Naive thymus-derived CD4-positive, alpha-beta T cell (primary cell): ENCODE measurements at regions of chr10 and their contacts with region 1.

Region 1: GRCh38 chr10:110007701-110008517 is at the start of gene ADD3:
- DNase-seq: peak; percentile 82 to 93 (median 90)
- ATAC-seq: peak; percentile 86
- H3K4me3 ChIP-seq: peak within 1 kb of the TSS; percentile 66
- H3K4me3 Mint-ChIP-seq: peak within 1 kb of the TSS in 2 of 10 donors; percentile 99 to 100
- H3K27ac ChIP-seq: peak within 1 kb of the TSS; percentile 88
- H3K27ac Mint-ChIP-seq: peak within 1 kb of the TSS in 7 of 9 donors; percentile 91 to 98 (median 94)
- H3K4me1 ChIP-seq: peaks cover 33 to 36% of the 10 kb centered on the region in 2 donors
- H3K4me1 Mint-ChIP-seq: peaks cover 28 to 54% (median 44%) of the 10 kb centered on the region in 7 donors
- H3K27me3 ChIP-seq: no peaks in the 10 kb centered on the region
- H3K27me3 Mint-ChIP-seq: peaks cover 0 to 6% (median 0%) of the 10 kb centered on the region in 5 donors
- total RNA-seq, gene ADD3: 281 to 463 (median 342) TPM

Region 2: DNA sequence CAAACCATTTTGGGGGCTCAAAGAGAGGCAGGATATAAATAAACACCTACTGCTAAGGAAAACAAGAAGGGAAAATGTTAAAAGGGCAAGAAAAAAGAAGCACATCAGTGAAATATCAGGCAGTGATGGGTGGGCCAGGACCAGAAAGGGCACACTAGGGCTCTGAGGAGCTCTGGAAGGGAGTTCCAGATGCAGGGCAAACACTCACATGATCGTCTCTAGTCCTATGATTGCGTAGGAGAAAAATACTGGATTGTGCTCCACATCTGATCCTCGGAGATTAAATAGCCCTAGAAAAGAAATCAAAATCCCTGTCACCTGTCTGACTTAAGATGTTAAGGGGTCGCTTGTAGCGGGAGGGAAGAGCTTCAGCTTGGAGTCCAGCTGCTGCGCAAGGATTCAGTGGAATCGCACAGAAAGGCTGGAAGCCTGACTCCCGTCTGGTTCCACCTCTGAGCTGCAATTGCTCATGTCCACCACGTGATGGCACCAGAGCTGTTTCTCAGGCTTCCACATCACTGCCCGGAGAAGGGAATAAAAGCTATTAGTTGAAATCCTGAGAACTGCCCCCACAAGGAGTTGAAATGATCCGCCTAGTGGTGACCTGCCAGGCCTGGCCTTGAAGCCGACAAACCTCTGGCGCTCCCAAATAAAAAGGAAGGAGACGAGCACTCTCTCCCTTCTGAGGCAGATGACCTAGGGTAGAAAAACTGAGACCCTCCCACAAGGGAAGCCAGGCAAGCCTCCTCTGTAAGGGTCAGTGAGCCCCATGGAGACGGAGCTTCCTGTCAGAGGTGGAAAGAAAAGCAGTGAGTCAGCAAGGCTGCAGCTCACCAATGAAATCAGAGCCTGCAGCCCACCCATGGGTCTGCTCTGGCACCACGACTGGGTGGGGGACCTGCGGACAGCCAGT is 123.8 kb before region 1 on chr10:
- CTCF ChIA-PET with region 1: interaction called, 4 read pairs
- POLR2A ChIA-PET with region 1: interaction called, 3 read pairs
- intact Hi-C with region 1: loop called (anchors 1 to 10 kb)
- DNase-seq: peak; percentile 33 to 66 (median 51)
- ATAC-seq: peak; percentile 88
- H3K4me3 ChIP-seq: no peak overlapping the region
- H3K4me3 Mint-ChIP-seq: no peak overlapping the region
- H3K27ac ChIP-seq: no peak overlapping the region
- H3K27ac Mint-ChIP-seq: peak overlapping the region in 3 of 9 donors; percentile 9 to 25 (median 22)
- H3K4me1 ChIP-seq: no peaks in the 10 kb centered on the region
- H3K4me1 Mint-ChIP-seq: peaks cover 5 to 19% (median 9%) of the 10 kb centered on the region in 7 donors
- H3K27me3 ChIP-seq: no peaks in the 10 kb centered on the region
- H3K27me3 Mint-ChIP-seq: no peaks in the 10 kb centered on the region

Region 3: DNA sequence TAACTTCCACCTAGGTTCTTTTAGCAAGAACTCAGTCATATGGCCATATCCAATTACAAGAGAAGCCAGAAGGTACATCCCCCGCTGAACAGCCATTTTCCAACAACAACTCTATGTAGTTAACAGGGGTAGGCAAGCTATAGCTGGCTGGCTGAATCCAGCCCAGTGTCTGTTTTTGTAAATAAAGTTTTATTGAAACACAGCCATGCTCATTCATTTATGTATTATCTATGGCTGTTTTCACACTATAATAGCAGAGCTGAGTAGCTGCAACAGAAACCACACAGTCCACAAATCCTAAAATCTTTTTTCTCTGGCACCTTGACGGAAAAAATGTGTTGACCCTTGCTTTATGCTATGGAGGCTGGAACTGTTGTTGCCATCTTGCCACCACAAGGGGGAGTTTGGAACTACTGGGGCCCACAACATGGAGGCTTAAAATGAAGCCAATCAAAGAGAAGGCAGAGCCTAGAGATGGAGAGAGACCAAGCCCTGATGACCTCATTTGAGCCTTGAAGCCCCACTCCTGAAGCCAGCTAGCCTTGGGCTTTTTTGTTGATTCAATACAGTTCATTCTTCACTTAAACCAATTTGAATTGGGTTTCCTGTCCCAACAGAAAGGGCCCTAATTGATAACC is 51.3 kb before region 1 on chr10:
- CTCF ChIA-PET with region 1: interaction called, 3 read pairs
- POLR2A ChIA-PET with region 1: no interaction called
- intact Hi-C with region 1: loop called in 1 of 2 experiments (anchors 2 kb)
- DNase-seq: peak in 1 of 9 donors; percentile 9
- ATAC-seq: peak; percentile 54
- H3K4me3 ChIP-seq: no peak overlapping the region
- H3K4me3 Mint-ChIP-seq: no peak overlapping the region
- H3K27ac ChIP-seq: no peak overlapping the region
- H3K27ac Mint-ChIP-seq: no peak overlapping the region
- H3K4me1 ChIP-seq: no peaks in the 10 kb centered on the region
- H3K4me1 Mint-ChIP-seq: peaks cover 0 to 15% (median 0%) of the 10 kb centered on the region in 7 donors
- H3K27me3 ChIP-seq: no peaks in the 10 kb centered on the region
- H3K27me3 Mint-ChIP-seq: peaks cover 0 to 18% (median 0%) of the 10 kb centered on the region in 5 donors

Region 4: GRCh38 chr10:110022716-110023504 is 15.0 kb after region 1 on chr10:
- CTCF ChIA-PET with region 1: no interaction called
- POLR2A ChIA-PET with region 1: interaction called, 4 read pairs
- intact Hi-C with region 1: loop called (anchors 1 to 2 kb)
- DNase-seq: no peak
- ATAC-seq: peak; percentile 38
- H3K4me3 ChIP-seq: no peak overlapping the region
- H3K4me3 Mint-ChIP-seq: peak overlapping the region in 9 of 10 donors; percentile 23 to 70 (median 44)
- H3K27ac ChIP-seq: no peak overlapping the region
- H3K27ac Mint-ChIP-seq: peak overlapping the region in 8 of 9 donors; percentile 9 to 89 (median 36)
- H3K4me1 ChIP-seq: peaks cover 21 to 44% of the 10 kb centered on the region in 2 donors
- H3K4me1 Mint-ChIP-seq: peaks cover 54 to 94% (median 86%) of the 10 kb centered on the region in 7 donors
- H3K27me3 ChIP-seq: no peaks in the 10 kb centered on the region
- H3K27me3 Mint-ChIP-seq: no peaks in the 10 kb centered on the region

Region 5: DNA sequence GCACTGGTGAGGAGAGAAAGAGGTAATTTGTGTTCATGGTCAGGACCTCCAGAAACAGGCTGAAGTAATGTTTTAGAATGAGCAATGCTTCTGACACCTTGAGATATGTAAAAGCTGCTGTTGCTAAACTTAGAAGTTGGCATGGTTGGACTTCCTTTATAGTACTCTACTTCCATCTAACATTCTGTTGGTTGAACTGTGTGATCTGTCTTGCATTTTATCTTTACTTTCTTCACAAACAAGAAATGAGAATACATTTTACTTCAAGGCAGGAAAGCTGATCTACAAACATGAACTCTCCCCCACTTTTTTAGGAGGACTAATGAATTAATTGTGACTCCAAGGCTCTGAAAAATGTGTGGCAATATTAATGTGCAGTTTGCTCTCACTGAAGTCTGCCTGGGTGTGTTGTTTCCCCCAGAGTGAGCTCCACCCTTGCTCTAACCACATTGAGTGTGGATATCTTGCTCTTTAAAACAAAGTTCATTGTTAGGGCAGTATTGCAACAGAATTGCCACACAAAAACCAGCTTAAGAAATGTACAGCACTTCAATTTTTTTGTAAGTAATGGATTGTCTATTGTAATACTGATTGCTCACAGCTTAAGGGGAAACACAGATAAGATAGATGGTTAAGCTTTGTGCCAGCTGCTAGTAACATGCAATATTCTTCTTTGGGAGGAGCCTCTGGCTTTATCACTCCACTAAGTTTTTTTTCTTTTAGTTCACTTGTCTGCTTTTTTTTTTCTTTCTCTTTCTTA is 68.8 kb after region 1 on chr10:
- CTCF ChIA-PET with region 1: interaction called, 5 read pairs
- POLR2A ChIA-PET with region 1: interaction called, 19 read pairs
- intact Hi-C with region 1: loop called (anchors 1 kb)
- DNase-seq: peak in 7 of 9 donors; percentile 47 to 74 (median 60)
- ATAC-seq: peak; percentile 85
- H3K4me3 ChIP-seq: peak overlapping the region; percentile 21
- H3K4me3 Mint-ChIP-seq: peak overlapping the region; percentile 73 to 92 (median 86)
- H3K27ac ChIP-seq: peak overlapping the region; percentile 56
- H3K27ac Mint-ChIP-seq: peak overlapping the region; percentile 79 to 97 (median 94)
- H3K4me1 ChIP-seq: peaks cover 69 to 84% of the 10 kb centered on the region in 2 donors
- H3K4me1 Mint-ChIP-seq: peaks cover 64 to 97% (median 87%) of the 10 kb centered on the region in 7 donors
- H3K27me3 ChIP-seq: no peaks in the 10 kb centered on the region
- H3K27me3 Mint-ChIP-seq: no peaks in the 10 kb centered on the region

Region 6: GRCh38 chr10:110304780-110305421 is 297.0 kb after region 1 on chr10 and contains the start of gene SMNDC1:
- CTCF ChIA-PET with region 1: no interaction called
- POLR2A ChIA-PET with region 1: no interaction called
- intact Hi-C with region 1: loop called (anchors 1 to 5 kb)
- DNase-seq: peak; percentile 93 to 97 (median 96)
- ATAC-seq: peak; percentile 94
- H3K4me3 ChIP-seq: peak within 1 kb of the TSS; percentile 91
- H3K4me3 Mint-ChIP-seq: peak within 1 kb of the TSS; percentile 94 to 99 (median 98)
- H3K27ac ChIP-seq: peak within 1 kb of the TSS; percentile 89
- H3K27ac Mint-ChIP-seq: peak within 1 kb of the TSS; percentile 97 to 100 (median 100)
- H3K4me1 ChIP-seq: peaks cover 32 to 38% of the 10 kb centered on the region in 2 donors
- H3K4me1 Mint-ChIP-seq: peaks cover 26 to 61% (median 55%) of the 10 kb centered on the region in 7 donors
- H3K27me3 ChIP-seq: no peaks in the 10 kb centered on the region
- H3K27me3 Mint-ChIP-seq: no peaks in the 10 kb centered on the region
- total RNA-seq, gene SMNDC1: 34.4 to 43.1 (median 40.1) TPM

Region 7: DNA sequence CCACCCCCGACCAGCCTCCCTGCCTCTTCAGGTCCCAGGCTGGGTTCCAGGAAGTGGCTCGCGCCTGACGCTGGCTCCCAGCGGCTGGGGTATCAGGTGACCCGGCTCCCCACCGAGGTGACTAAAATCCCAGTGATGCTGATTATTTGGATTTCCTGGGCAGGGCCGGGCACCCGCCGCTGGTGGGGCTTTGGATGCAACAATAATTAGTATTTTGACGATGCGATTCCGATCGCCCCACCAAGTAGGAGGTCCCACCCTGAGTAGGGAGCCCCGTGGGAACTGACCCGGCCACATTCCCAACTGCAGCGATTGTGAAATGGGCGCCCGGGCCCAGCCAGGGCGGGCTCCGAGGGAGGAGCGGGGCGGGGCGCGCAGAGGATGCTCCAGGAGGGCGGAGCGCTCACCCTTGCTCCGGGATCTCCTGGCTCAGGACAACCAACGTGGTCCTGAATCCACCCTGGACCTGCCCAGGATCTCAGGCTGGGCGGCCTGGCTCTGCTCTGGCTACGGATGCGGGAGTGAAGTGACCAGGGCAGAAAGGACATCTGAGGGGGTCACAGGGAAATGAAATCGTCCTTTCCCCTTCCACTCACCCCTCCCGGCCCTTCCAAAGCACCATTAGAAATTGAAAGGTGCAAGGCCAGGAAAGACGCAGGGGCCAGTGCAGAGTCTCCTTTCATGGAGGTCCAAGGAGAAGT is 522.4 kb after region 1 on chr10:
- CTCF ChIA-PET with region 1: no interaction called
- POLR2A ChIA-PET with region 1: no interaction called
- intact Hi-C with region 1: no loop called
- DNase-seq: no peak
- ATAC-seq: peak; percentile 8
- H3K4me3 ChIP-seq: no peak overlapping the region
- H3K4me3 Mint-ChIP-seq: peak overlapping the region in 6 of 10 donors; percentile 24 to 63 (median 36)
- H3K27ac ChIP-seq: no peak overlapping the region
- H3K27ac Mint-ChIP-seq: no peak overlapping the region
- H3K4me1 ChIP-seq: peaks cover 9 to 21% of the 10 kb centered on the region in 2 donors
- H3K4me1 Mint-ChIP-seq: peaks cover 13 to 64% (median 23%) of the 10 kb centered on the region in 7 donors
- H3K27me3 ChIP-seq: no peaks in the 10 kb centered on the region
- H3K27me3 Mint-ChIP-seq: peaks cover 0 to 11% (median 0%) of the 10 kb centered on the region in 5 donors